Posterior cingulate gyrus (tissue), 11 donors: ENCODE measurements at regions of chr6 and their contacts with region 1.

Region 1: GRCh38 chr6:135179920-135180541 is 1.1 kb upstream of the MYB start:
- DNase-seq: no peak

Region 2: DNA sequence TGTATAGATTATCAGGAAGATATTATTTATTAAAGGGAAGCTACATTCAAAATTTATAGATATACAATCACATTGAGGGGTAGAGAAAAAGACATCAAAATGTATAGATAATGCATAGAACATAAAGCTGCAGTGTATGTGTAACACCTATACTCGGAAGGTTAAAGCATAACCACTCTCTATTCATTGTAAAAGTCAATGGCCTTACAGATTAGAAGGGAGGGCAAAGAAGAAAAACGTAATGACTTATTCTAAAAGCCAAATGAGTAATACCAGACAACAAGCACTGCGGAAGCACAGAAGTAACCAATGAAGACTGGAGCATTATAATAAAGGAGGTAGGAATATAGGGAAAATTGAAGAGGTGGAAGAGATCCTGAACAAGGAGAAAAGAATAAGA is 136.7 kb before region 1 on chr6:
- intact Hi-C with region 1: no loop called
- DNase-seq: no peak

Region 3: GRCh38 chr6:135054569-135055498 is 125.2 kb before region 1 on chr6 and contains the start of gene HBS1L:
- intact Hi-C with region 1: loop called (anchors 10 kb)
- DNase-seq: peak; percentile 93 to 99 (median 96)

Region 4: GRCh38 chr6:135096403-135097135 is 83.5 kb before region 1 on chr6:
- intact Hi-C with region 1: no loop called
- DNase-seq: no peak